ENCODE measurements at regions of chr5 and their contacts with region 1.

Region 1: DNA sequence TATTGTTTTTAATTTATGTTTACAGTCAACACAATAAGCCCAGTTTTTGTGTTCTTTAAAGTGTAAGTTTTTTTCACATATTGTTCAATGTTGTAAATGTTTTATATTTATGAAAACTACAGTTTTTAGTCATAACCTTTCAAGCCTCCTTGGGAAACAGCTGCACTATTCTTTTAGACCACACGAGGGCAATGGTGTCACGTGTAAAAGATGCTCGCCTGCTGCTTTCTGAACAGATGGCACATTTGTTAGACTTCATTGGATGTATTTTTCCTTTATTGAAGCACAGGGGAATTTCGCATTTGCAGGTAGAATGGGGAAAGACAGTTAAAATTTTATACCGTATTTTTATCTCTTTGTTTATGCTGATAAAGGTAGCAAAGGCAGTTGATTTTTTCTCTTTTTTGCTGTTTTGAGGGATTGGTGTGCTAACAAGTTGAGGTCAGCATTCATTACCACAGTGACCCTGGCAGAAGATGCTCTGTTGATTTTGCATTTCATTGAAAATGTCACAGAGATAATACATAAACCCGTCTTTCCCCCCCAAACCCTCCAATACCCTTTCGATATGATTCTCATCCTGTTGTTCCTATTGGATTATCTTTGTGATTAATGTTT is 59.0 kb downstream of the MAT2B start:
- H3K4me3 Mint-ChIP-seq: no peak overlapping the region
- H3K27ac Mint-ChIP-seq: no peak overlapping the region
- H3K4me1 Mint-ChIP-seq: peaks cover 16% of the 10 kb centered on the region
- H3K27me3 Mint-ChIP-seq: peaks cover 44% of the 10 kb centered on the region

Region 2: DNA sequence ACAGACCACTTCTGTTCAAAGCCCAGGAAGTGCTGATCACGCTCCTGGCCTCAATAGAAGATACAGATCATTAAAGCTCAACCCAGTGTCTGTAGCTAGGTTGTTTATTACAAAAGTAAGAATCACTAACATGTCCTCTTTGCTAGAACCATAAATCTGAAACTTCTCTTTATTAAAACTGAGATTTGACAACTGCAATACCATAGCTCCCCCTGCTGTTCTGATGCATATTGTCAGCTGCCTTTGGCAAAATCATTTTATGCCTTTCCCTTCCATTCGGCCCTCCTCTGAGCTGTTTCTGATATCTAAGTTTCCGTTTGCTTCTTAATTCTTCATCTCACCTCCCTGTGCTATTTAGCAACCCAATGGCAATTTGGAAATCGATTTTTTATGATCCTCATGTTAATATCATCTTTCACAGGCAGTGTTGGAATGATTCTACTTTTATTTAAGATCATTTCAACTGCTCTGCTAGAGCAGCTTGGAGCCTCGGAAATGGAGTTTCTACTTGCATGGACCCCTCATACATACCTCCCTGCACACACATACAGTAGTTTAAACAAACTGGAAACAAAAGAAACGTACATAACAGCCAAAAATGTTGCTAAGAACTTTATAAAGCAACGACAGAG is 939.8 kb after region 1 on chr5:
- intact Hi-C with region 1: loop called (anchors 1 kb)
- H3K4me3 Mint-ChIP-seq: no peak overlapping the region
- H3K27ac Mint-ChIP-seq: no peak overlapping the region
- H3K4me1 Mint-ChIP-seq: no peaks in the 10 kb centered on the region
- H3K27me3 Mint-ChIP-seq: no peaks in the 10 kb centered on the region